PC-9 (cell line): ENCODE measurements at regions of chr3 and their contacts with region 1.

Region 1: DNA sequence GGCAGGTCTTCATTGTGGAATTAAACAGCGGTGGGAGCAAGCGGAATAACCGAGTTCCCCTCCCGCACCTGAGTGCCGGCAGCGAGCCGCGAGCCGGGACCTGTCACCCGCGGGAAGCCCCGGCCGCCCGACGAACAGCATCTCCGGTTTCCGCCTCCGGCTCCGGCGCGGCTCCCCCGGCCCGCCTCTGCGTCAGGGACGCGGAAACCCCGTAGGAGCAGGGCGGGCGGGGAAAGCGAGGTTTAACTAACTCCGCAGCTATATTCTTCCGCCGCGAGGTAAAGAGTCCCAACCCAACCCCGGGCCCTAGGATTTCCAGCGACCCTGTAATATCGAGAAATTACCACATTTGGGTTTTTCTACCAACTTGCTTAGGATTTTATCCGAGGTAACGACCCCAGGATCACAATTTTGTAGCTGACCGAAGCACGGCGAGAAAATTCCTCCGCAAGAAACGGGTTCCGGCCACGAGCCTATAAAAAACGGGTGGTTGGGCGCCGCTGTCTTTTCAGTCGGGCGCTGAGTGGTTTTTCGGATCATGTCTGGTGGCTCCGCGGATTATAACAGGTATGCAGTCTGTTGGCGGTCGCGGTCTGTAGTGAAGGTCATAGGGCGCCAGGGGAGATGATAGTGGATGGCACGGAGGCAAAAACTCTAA is at the start of gene EIF4A2:
- DNase-seq: peak; percentile 85 to 95
- H3K4me3 ChIP-seq: peak within 1 kb of the TSS; percentile 92
- H3K27ac ChIP-seq: peak within 1 kb of the TSS; percentile 93
- H3K4me1 ChIP-seq: peaks cover 34% of the 10 kb centered on the region
- H3K27me3 ChIP-seq: no peaks in the 10 kb centered on the region
- CTCF ChIP-seq: no peak
- total RNA-seq, gene EIF4A2: 446 and 618 TPM in 2 replicates

Region 2: DNA sequence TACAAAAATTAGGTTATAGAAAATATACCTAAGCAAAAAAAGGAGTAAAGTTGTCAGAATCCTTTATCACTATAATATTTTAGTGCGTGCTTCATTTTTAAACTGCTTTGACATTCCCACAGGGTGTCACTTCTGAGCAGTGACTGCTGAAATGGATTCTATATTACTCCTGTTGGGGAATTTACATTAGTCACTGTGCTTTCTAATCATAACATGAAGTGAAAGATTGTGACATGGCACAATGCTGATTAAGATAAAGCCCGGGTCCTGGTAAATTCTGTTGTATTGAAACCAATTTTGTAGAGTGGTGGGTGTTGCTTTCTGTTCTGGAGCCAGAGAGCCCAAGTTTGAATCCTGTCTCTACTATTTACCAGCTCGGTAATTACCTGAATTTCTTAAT is 1492.9 kb before region 1 on chr3:
- CTCF ChIA-PET with region 1: no interaction called
- POLR2A ChIA-PET with region 1: interaction called, 11 read pairs
- intact Hi-C with region 1: no loop called
- DNase-seq: no peak
- H3K4me3 ChIP-seq: no peak overlapping the region
- H3K27ac ChIP-seq: no peak overlapping the region
- H3K4me1 ChIP-seq: no peaks in the 10 kb centered on the region
- H3K27me3 ChIP-seq: no peaks in the 10 kb centered on the region
- CTCF ChIP-seq: no peak

Region 3: DNA sequence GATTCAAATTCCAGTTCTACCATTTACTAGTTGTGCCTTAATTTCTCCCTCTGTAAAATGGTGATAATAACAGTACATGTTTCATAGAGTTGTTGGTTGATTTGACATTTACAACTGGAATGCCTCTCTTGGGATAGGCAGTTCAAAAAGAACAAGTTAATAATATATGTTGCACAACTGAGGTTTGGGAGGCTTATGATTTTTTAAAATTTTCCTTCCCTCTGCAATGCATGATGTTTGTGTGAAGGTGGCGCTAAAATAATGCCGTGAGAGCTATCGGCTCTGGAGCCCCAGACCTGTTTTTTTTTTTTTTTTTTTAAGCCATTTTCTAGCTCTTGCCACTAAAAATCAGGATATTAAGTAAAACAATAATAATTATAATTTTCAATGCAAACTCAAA is 194.1 kb before region 1 on chr3:
- CTCF ChIA-PET with region 1: interaction called, 15 read pairs
- POLR2A ChIA-PET with region 1: interaction called, 7 read pairs
- intact Hi-C with region 1: no loop called
- DNase-seq: peak; percentile 18 to 62
- H3K4me3 ChIP-seq: peak overlapping the region; percentile 38; the same call in 1 of the 2 replicates
- H3K27ac ChIP-seq: peak overlapping the region; percentile 87
- H3K4me1 ChIP-seq: peaks cover 40% of the 10 kb centered on the region
- H3K27me3 ChIP-seq: no peaks in the 10 kb centered on the region
- CTCF ChIP-seq: peak; percentile 40; the same call in 1 of the 2 replicates

Region 4: GRCh38 chr3:186596568-186597287 is 186.5 kb before region 1 on chr3:
- CTCF ChIA-PET with region 1: no interaction called
- POLR2A ChIA-PET with region 1: interaction called, 17 read pairs
- intact Hi-C with region 1: no loop called
- DNase-seq: peak; percentile 72 to 79
- H3K4me3 ChIP-seq: no peak overlapping the region
- H3K27ac ChIP-seq: peak overlapping the region; percentile 48
- H3K4me1 ChIP-seq: peaks cover 24% of the 10 kb centered on the region
- H3K27me3 ChIP-seq: no peaks in the 10 kb centered on the region
- CTCF ChIP-seq: no peak

Region 5: DNA sequence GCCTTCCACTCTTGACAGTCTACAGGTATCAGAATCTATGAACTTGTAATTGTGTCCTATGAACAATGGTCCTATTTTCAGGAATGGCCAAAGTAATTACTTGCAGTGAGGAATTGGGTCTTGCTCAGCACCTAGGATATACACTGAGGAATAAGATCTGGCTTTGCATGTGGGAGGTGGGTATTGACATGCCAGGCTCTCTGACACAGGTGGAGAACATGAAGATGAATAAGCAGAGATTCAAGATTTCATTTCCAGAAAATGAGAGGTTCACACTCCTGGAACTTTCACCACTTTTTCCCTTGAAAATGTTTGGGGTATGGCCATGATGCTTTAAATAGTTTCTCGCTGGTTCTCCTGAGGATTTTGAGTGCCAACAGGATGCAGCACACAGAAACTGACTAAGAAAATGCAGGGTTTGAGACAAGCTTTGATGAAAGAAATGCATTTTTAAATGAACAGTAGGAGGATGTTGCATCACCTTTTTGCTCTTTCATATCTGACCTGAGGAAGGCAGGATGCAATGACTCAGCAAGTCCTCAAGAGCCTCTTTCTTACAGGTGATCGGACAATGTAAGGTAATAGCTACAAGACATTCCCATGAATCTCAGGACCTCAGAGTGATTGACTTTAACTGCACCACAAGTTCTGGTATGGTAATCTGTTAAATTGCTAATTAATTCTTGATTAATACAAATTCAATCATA is 113.7 kb before region 1 on chr3:
- CTCF ChIA-PET with region 1: no interaction called
- POLR2A ChIA-PET with region 1: interaction called, 15 read pairs
- intact Hi-C with region 1: no loop called
- DNase-seq: peak; percentile 27 to 91
- H3K4me3 ChIP-seq: peak overlapping the region; percentile 4; the same call in 1 of the 2 replicates
- H3K27ac ChIP-seq: peak overlapping the region; percentile 87
- H3K4me1 ChIP-seq: peaks cover 22% of the 10 kb centered on the region
- H3K27me3 ChIP-seq: no peaks in the 10 kb centered on the region
- CTCF ChIP-seq: no peak

Region 6: GRCh38 chr3:186754006-186754405 is 29.2 kb before region 1 on chr3:
- CTCF ChIA-PET with region 1: no interaction called
- POLR2A ChIA-PET with region 1: interaction called, 7 read pairs
- intact Hi-C with region 1: loop called (anchors 2 kb)
- DNase-seq: no peak
- H3K4me3 ChIP-seq: peak overlapping the region; percentile 46; the same call in 1 of the 2 replicates
- H3K27ac ChIP-seq: peak overlapping the region; percentile 91
- H3K4me1 ChIP-seq: peaks cover 31% of the 10 kb centered on the region
- H3K27me3 ChIP-seq: no peaks in the 10 kb centered on the region
- CTCF ChIP-seq: no peak

Region 7: DNA sequence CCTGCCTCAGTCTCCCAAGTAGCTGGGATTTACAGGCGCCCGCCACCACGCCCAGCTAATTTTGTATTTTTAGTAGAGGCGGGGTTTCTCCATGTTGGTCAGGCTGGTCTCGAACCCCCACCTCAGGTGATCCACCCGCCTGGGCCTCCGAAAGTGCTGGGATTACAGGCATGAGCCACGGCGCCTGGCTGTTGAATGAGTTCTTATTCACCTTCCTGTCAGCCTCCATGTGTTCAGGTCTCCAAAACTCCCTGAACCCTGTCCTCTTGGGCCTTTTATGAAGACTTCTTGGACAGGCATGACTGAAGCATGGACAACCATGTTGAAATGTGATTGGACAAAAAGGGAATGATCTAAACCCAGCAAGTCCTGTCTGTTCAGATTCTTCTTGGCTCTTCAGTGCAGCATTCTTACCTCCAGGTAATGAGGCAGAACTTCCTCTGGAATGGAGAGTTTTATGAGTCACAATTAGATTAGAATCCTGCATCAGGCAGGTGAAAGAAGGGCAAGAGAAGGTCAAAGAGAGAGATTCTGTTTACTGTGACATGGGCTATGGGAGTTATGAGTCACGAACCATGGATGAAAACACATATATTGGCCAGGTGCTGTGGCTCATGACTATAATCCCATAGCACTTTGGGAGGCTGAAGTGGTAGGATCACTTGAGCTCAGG is 22.9 kb before region 1 on chr3:
- CTCF ChIA-PET with region 1: interaction called, 3 read pairs
- POLR2A ChIA-PET with region 1: interaction called, 7 read pairs
- intact Hi-C with region 1: loop called (anchors 1 kb)
- DNase-seq: peak; percentile 65 to 100
- H3K4me3 ChIP-seq: no peak overlapping the region
- H3K27ac ChIP-seq: peak overlapping the region; percentile 71
- H3K4me1 ChIP-seq: peaks cover 21% of the 10 kb centered on the region
- H3K27me3 ChIP-seq: no peaks in the 10 kb centered on the region
- CTCF ChIP-seq: no peak